ENCODE measurements at regions of chr17 and their contacts with region 1.

Region 1: DNA sequence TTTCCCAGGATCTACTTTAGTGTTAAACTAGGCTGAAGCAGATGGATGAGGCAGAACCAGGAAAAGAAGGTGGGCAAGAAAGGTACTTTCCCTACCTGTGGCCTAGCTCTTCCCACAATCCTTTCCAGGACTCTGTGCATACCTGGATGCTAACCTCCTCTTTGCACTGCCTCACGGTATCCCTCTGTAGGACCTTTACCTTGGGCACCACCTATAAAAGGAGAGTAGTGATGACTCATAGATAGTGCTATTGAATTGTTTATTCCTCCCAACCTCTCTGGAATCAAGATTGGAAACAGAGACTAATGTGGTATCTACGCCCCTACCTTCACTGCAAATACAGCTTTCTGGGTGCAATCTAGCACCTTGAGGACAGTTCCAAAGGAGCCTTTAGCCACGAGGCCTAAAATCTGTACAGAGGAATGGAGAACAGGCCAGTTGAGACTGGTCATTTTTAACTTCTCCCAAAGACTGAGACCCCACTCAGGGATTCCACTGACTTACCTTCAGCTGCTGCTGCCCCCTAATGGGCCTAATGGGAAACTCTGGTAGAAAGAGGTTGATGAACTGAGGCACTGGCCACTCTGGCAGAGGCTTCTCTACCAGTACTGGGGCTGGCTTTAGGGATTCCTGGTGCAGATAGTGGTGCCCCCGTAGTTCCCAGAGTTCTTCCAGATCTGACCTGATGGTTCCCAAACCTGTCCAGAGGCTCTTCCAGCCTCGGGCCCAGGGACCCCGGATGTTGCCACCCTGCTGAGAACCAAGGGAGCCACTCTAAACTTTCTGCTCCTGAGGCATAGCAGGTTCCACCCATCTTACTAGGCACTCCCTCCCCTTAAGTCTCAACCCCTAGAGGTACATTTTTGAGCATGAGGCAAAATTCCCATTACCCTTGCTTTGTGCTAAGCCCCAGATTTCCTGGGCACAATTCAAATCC is 781 bp downstream of the RSKR start:
- DNase-seq: no peak
- ATAC-seq: peak; percentile 35 to 44

Region 2: DNA sequence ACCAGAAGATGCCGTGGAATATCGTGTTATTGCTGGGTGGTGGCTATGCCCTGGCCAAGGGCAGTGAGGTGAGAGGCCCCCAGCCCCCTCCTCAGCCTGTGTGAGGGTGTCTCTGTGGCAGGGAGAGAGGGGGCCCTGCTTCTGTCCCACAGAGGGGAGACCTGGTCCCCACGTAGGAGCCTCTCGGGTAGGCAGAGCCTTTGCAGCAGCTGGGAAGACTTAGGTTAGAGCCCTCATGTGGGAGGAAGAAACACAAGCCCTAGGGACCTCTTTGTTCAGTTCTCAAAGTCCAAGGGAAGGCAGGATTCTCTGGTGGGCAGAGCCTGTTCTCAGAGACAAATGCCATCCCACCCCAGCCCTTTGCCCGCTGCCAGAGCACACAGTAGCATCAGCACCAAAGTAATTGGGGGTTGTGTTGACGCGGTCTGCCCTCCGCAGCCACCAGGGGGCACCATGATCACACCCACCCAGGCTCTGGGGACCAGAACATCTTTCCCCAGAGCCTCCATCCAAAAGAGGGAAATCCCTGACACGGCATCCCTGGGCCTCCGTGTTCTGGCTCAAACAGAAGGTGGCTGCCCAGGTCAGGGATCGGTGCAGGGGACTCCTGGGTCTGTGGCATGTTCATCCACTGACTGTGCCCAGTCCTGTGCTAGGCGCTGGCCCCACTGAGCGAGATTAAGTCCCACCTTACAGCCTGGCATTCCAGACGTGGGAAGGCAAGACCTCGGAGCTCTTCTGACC is 118.6 kb before region 1 on chr17:
- intact Hi-C with region 1: loop called (anchors 2 to 5 kb)
- DNase-seq: peak; percentile 66
- ATAC-seq: peak; percentile 68 to 77

Region 3: GRCh38 chr17:28507567-28508203 is 105.5 kb before region 1 on chr17:
- intact Hi-C with region 1: no loop called
- DNase-seq: no peak
- ATAC-seq: peak in 1 of 2 donors; percentile 8

Region 4: GRCh38 chr17:28518132-28518531 is 95.1 kb before region 1 on chr17:
- intact Hi-C with region 1: no loop called
- DNase-seq: no peak
- ATAC-seq: no peak

Region 5: DNA sequence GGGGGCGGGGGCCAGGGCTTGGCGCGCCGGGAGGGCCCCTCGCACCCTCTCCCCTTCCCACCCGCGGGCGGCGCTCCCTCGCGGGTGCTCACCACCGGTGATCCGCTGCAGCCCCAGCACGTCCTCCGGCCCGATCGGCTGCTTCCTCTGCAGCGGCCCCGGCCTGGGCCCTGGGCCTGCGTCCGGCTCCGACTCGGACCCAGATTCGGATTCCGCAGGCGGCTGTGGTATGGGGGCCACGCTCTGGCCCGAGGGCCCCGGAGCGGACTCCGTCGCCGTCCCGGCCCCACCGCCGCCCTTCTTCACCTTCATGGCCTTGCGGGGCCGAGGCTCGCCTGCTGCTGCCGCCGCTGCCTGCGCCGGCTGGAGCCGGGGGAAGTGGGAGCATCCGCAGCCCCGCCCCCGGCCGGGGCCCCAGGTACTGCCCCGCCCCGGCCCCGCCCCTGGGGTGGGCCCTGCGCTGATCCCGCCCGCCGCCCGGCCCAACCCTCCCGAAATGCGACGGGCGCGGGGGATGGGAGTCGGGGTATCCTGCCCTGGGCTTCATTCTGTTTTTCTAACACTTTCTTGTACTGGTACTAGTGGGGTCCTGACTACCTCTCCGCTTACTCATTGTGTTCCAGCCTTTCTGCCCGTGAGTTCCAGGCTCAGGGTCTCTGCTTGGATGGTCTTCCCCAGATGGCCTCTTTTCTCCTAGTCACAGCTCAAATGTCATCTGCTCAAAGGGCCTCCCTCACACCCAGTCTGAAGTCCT is 60.8 kb before region 1 on chr17 and contains the start of gene UNC119:
- intact Hi-C with region 1: loop called in 1 of 2 experiments (anchors 5 kb)
- DNase-seq: peak; percentile 82
- ATAC-seq: peak; percentile 97
- total RNA-seq, gene UNC119: 13.6 to 23.6 TPM

Measured in left cardiac atrium (tissue), 4 donors.